ENCODE measurements at regions of chr16 and their contacts with region 1.

Region 1: DNA sequence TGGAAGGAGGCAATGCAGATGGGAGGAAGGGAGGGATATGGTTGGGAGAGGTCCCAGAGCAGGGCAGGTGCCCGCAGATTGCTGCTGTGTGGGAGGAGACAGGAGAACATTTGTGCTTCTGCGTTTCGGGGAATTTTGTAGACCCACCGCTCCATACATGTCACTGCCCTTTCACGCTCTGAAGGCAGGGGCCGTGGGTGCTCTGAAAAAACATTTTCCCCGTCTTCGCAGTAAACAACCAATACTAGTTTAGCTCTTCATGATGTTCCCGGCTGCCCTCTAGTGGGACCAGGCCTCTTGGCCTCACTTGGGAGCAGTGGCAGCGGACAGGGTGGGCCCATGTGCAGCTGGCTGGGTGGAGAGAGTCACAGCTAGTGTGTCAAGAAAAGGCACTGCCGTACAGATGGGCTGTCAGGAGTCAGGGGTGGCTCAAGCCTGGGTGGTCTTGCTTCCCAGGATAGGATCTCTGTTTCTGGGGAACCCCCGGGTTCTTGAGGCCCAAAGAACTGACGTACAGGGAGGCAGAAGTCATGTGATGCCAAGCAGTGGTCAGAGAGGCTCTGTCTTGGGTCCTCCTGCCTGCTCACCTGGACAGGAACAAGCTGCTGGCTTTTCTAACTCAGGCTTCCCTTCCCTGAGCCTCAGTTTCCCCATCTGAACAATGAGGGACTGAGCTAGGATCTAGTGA is 46.5 kb upstream of the CPNE2 start:
- DNase-seq: peak; percentile 66
- CTCF ChIP-seq: peak; percentile 82

Region 2: GRCh38 chr16:56866943-56867830 is 178.7 kb before region 1 on chr16:
- in situ Hi-C with region 1: loop called (anchors 10 kb)
- DNase-seq: peak; percentile 72
- CTCF ChIP-seq: peak; percentile 56

Region 3: DNA sequence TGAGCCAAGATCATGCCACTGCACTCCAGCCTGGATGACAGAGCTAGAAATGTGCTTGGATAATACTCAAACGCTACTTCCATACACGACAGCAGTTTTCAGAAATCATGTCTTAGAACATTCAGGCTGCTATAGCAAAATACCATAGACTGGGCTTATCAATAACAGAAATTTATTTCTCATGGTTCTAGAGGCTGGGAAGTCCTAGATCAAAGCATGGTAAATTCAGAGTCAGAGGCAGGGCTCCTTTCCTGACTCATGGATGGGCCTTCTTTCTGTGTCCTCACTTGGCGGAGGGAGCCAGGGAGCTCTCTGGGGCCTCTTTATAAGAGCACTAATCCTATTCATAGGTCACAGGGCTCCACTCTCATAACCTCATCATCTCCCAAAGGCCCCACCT is 138.4 kb before region 1 on chr16:
- in situ Hi-C with region 1: no loop called
- DNase-seq: no peak
- CTCF ChIP-seq: no peak

Region 4: GRCh38 chr16:56964243-56965148 is 81.3 kb before region 1 on chr16:
- in situ Hi-C with region 1: loop called (anchors 5 kb)
- DNase-seq: peak; percentile 85
- CTCF ChIP-seq: peak; percentile 100

Region 5: GRCh38 chr16:57226701-57227621 is 181.1 kb after region 1 on chr16:
- in situ Hi-C with region 1: no loop called
- DNase-seq: no peak
- CTCF ChIP-seq: no peak

Region 6: GRCh38 chr16:57462209-57462977 is 416.6 kb after region 1 on chr16 and contains the start of gene POLR2C:
- in situ Hi-C with region 1: no loop called
- DNase-seq: peak; percentile 92
- CTCF ChIP-seq: peak; percentile 99

Measured in GM13977 (cell line).